SK-N-SH (cell line): ENCODE measurements at regions of chr5 and their contacts with region 1.

Region 1: DNA sequence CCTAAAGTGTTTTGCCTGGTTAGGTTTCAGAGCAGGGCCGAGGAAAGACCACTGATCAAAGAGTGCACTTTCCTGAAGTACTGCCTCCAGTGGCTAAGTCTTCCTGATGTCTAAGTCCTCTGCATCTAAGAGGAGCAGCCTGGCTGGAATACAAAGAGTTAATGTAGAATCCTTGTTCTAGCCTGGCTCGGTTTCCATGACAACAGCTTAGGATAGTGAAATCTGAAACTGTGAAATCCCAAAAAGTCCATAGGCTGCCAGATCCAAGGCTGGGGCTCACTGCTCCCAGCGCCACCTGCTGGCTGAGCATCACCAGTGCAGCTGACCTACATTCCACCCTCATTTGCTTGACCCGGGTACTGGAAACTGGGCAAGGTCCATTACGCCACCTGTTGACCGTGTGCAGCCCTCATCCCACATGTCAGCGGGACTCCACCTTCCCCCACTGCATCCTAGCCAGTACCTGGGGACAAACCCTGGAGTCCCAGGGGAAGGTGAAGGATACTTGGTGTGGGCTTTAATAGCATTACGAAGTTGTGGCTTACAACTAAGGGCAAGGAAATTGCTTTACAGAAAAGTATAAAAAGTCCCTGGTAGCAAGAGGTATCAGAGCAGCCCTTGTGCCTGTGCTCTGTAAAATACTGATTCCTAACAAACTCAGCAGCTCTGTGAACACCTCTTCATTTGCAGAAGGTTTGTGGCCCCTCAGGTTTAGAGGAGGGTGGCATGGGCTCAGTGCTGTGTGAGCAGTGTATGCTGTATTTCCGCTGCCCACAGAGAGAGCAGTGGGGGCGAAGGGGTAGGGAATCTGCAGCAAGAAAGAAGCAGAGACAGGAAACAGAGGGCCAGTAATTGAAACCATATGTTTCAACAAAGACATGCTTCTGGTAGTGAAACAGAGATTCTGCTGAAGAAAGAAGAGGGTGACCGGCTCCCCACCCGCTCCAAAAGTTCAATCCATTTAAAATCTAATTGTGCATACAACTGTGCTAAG is 36.0 kb downstream of the PCDHGC5 start:
- DNase-seq: peak; percentile 79
- H3K4me3 ChIP-seq: peak overlapping the region; percentile 23 to 52; a peak in 3 of 4 replicates
- H3K27ac ChIP-seq: peak overlapping the region; percentile 99 to 100
- H3K4me1 ChIP-seq: peaks cover 36 to 70% of the 10 kb centered on the region in 2 experiments
- H3K27me3 ChIP-seq: no peaks in the 10 kb centered on the region
- CTCF ChIP-seq: peak; percentile 100
- EP300 ChIP-seq: peak; percentile 81 to 86; a peak in 3 of 4 replicates
- RAD21 ChIP-seq: peak; percentile 98

Region 2: GRCh38 chr5:141320225-141321169 is 204.4 kb before region 1 on chr5 and contains the start of gene TAF7:
- CTCF ChIA-PET with region 1: interaction called, 13 read pairs
- POLR2A ChIA-PET with region 1: no interaction called
- DNase-seq: peak; percentile 94
- H3K4me3 ChIP-seq: peak within 1 kb of the TSS; percentile 80 to 92
- H3K27ac ChIP-seq: peak within 1 kb of the TSS; percentile 96 to 98
- H3K4me1 ChIP-seq: no peaks in the 10 kb centered on the region; a peak in 1 of 4 replicates
- H3K27me3 ChIP-seq: no peaks in the 10 kb centered on the region
- CTCF ChIP-seq: peak; percentile 90
- EP300 ChIP-seq: 0 out of 4 replicates have a peak, but pooled peaks of 1 of the 2 experiments have one; percentile 31
- RAD21 ChIP-seq: peak; percentile 60
- polyA plus RNA-seq, gene TAF7: 30.6 and 38.7 TPM in 2 replicates

Region 3: DNA sequence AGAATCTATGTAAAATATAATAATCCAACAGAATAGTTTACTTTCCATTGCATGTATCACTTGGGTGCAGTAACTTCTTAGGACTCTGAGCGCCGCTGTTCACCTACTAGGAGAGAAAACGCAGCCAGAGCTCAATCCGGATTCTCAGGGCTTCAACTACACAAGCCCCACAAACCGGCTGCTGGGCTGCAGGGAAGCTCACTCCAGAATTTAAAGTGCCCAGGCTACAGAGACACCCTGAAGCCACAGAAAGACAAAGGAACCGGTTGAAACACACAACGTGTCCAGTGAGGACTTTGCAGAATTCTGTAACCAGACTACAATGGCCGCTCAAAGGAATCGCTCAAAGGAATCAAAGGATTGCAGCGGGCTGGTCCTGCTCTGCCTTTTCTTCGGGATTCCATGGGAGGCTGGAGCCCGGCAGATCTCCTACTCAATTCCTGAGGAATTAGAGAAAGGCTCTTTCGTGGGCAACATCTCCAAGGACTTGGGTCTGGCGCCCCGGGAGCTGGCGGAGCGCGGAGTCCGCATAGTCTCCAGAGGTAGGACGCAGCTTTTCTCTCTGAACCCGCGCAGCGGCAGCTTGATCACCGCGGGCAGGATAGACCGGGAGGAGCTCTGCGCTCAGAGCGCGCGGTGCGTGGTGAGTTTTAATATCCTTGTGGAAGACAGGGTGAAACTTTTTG is 111.9 kb before region 1 on chr5 and contains the start of gene PCDHGA10:
- CTCF ChIA-PET with region 1: interaction called, 21 read pairs
- POLR2A ChIA-PET with region 1: interaction called, 6 read pairs
- DNase-seq: no peak
- H3K4me3 ChIP-seq: peak within 1 kb of the TSS; percentile 22 to 28; a peak in 3 of 4 replicates
- H3K27ac ChIP-seq: no peak within 1 kb of the TSS
- H3K4me1 ChIP-seq: no peaks in the 10 kb centered on the region
- H3K27me3 ChIP-seq: no peaks in the 10 kb centered on the region
- CTCF ChIP-seq: peak; percentile 54
- EP300 ChIP-seq: no peak
- RAD21 ChIP-seq: peak; percentile 47
- polyA plus RNA-seq, gene PCDHGA10: 1.6 and 2.0 TPM in 2 replicates

Region 4: DNA sequence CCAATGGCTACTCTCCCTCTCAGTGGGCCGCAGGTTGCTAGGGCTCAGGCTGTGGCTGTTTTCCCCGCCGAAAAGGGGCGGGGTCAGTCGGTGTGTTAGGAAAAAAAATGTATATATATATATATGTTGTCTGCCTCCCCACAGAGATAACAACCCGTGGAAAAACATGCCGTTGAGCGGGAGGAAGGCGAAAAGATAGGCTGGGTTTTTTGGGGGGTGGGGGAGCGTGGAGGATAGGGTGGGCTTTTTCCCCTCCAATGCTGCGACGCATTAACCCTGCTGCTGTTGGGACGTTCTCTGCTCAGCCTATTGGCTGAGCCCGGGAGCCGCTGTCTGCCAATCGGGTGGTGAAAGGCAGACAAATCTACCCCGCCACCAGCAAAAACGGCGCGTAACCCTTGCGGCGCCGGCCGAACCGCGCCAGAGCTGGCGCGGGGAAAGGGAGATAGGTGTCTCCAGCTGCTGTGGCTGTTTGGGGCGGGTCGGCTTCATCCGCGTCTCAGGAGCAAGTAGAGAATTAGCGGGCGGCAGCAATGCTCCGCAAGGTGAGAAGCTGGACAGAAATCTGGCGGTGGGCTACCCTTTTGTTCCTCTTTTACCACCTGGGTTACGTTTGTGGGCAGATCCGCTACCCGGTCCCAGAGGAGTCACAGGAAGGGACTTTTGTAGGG is 40.1 kb before region 1 on chr5 and contains the start of gene PCDHGC4:
- CTCF ChIA-PET with region 1: interaction called, 26 read pairs
- POLR2A ChIA-PET with region 1: interaction called, 7 read pairs
- DNase-seq: peak; percentile 91
- H3K4me3 ChIP-seq: peak within 1 kb of the TSS in 1 of 2 experiments; percentile 42; a peak in 2 of 4 replicates
- H3K27ac ChIP-seq: peak within 1 kb of the TSS; percentile 11 to 91; a peak in 3 of 4 replicates
- H3K4me1 ChIP-seq: peaks cover 30 to 44% of the 10 kb centered on the region in 2 experiments
- H3K27me3 ChIP-seq: no peaks in the 10 kb centered on the region
- CTCF ChIP-seq: no peak
- EP300 ChIP-seq: no peak
- RAD21 ChIP-seq: 0 out of 2 replicates have a peak, but pooled peaks have one; percentile 2
- polyA plus RNA-seq, gene PCDHGC4: 0.53 and 0.78 TPM in 2 replicates

Region 5: DNA sequence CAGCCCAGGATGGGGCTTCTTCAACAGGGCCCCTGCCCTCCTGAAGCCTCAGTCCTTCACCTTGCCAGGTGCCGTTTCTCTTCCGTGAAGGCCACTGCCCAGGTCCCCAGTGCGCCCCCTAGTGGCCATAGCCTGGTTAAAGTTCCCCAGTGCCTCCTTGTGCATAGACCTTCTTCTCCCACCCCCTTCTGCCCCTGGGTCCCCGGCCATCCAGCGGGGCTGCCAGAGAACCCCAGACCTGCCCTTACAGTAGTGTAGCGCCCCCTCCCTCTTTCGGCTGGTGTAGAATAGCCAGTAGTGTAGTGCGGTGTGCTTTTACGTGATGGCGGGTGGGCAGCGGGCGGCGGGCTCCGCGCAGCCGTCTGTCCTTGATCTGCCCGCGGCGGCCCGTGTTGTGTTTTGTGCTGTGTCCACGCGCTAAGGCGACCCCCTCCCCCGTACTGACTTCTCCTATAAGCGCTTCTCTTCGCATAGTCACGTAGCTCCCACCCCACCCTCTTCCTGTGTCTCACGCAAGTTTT is 12.5 kb before region 1 on chr5:
- CTCF ChIA-PET with region 1: interaction called, 92 read pairs
- POLR2A ChIA-PET with region 1: interaction called, 7 read pairs
- DNase-seq: peak; percentile 69
- H3K4me3 ChIP-seq: peak overlapping the region in 1 of 2 experiments; percentile 33; a peak in 1 of 4 replicates
- H3K27ac ChIP-seq: peak overlapping the region; percentile 99 to 100
- H3K4me1 ChIP-seq: peaks cover 71 to 77% of the 10 kb centered on the region in 2 experiments
- H3K27me3 ChIP-seq: no peaks in the 10 kb centered on the region
- CTCF ChIP-seq: peak; percentile 88
- EP300 ChIP-seq: no peak
- RAD21 ChIP-seq: peak; percentile 18; the same call in 1 of the 2 replicates